AG04449 (cell line): ENCODE measurements at regions of chr13 and their contacts with region 1.

Region 1: DNA sequence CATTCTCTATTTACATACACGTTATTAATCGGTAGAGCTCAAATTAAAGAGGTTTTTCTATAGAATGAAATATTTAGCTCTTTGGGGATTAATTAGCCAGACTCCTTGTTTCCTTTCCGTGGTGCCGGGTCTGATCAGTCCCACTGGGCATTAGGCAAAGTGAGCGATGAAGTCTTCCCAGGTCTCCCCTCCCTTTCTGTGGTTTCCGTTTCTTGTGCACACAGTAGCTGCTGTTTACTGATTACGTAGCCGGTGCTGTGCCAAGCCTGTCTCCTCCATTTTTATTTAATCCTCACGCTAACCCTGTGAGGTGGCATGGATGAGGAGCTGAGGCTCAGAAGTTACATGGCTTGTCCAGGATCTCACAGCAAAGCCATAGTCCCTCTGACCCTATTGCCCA is 9.0 kb downstream of the SLC25A15 start:
- DNase-seq: no peak
- H3K4me3 ChIP-seq: no peak overlapping the region
- CTCF ChIP-seq: no peak

Region 2: GRCh38 chr13:40706439-40706838 is 91.9 kb before region 1 on chr13:
- CTCF ChIA-PET with region 1: no interaction called
- POLR2A ChIA-PET with region 1: no interaction called
- DNase-seq: no peak
- H3K4me3 ChIP-seq: no peak overlapping the region
- CTCF ChIP-seq: no peak

Region 3: GRCh38 chr13:40813661-40814454 is 15.5 kb after region 1 on chr13:
- CTCF ChIA-PET with region 1: interaction called, 10 read pairs
- POLR2A ChIA-PET with region 1: no interaction called
- DNase-seq: no peak
- H3K4me3 ChIP-seq: no peak overlapping the region
- CTCF ChIP-seq: no peak

Region 4: DNA sequence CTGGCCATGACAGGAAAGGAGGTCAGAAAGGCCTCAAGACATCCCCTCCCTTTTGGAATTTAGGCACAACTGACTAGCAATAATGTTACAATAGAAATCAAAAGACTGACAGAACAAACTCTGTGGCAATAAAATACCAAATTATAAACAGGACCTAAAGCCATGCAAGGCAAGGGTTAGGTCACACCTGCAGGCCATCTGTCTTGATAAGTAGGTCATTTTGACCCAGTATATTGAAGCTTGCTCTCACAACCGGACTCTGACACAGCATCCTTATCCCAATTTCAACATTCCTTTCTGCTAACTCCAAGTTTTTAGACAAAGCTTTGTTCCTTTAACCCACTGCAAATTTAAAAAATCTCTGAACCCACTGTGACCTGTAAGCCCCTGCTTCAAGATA is 303.5 kb after region 1 on chr13:
- CTCF ChIA-PET with region 1: no interaction called
- POLR2A ChIA-PET with region 1: no interaction called
- DNase-seq: no peak
- H3K4me3 ChIP-seq: no peak overlapping the region
- CTCF ChIP-seq: no peak